ENCODE measurements at regions of chr5 and their contacts with region 1.

Region 1: GRCh38 chr5:36695677-36696673 is 89.6 kb downstream of the SLC1A3 start:
- DNase-seq: peak; percentile 69
- ATAC-seq: peak; percentile 79
- H3K4me3 ChIP-seq: no peak overlapping the region
- H3K27ac ChIP-seq: no peak overlapping the region
- H3K4me1 ChIP-seq: peaks cover 1 to 10% of the 10 kb centered on the region in 2 experiments; a peak in 2 of 4 replicates
- H3K27me3 ChIP-seq: no peaks in the 10 kb centered on the region
- CTCF ChIP-seq: peak; percentile 67 to 86 (median 85)
- POLR2A ChIP-seq: no peak
- RAD21 ChIP-seq: peak; percentile 82

Region 2: DNA sequence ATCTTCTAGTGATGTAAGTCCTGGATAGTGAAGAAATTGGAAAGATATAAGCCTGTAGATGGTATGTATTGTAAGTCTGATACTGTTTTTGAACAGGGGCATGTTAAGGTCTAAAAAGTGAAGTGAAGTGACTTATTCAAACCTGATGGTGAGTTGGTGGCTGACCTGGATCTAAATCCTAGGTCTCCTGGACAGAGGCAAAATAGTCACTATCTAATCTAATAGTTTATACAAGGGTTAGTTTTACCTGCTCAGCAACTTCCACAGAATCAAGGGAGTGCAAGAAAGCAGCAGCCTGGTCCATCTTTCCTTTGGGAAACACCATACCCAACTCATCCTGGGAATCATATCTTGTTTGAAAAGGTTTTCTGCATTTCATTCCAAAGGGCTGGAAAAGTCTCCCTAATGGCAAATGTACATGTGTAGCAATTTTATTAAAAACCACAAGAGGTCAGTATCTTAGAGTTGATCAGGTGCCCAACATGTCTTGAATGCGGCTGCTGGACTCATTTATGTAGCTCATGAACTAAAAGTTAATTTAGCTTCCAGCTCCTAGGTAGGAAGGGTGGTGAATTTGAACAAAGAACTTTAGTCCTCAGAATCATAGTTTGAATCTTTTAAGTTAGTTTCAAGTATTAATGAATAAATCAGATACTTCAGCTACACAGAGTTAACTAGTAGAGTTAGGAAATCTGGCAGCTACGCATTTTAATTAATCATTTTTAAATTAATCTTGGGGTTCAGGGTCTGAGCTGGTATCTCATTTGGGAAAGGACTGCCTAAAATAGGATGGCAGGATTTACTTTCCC is 518.1 kb before region 1 on chr5:
- CTCF ChIA-PET with region 1: interaction called, 10 read pairs
- POLR2A ChIA-PET with region 1: no interaction called
- RAD21 ChIA-PET with region 1: no interaction called
- intact Hi-C with region 1: loop called (anchors 2 kb)
- DNase-seq: peak; percentile 7
- ATAC-seq: peak; percentile 82
- H3K4me3 ChIP-seq: no peak overlapping the region
- H3K27ac ChIP-seq: no peak overlapping the region
- H3K4me1 ChIP-seq: no peaks in the 10 kb centered on the region
- H3K27me3 ChIP-seq: no peaks in the 10 kb centered on the region
- CTCF ChIP-seq: peak; percentile 41 to 66 (median 42); a peak in 3 of 6 replicates
- POLR2A ChIP-seq: no peak
- RAD21 ChIP-seq: peak; percentile 55

Region 3: DNA sequence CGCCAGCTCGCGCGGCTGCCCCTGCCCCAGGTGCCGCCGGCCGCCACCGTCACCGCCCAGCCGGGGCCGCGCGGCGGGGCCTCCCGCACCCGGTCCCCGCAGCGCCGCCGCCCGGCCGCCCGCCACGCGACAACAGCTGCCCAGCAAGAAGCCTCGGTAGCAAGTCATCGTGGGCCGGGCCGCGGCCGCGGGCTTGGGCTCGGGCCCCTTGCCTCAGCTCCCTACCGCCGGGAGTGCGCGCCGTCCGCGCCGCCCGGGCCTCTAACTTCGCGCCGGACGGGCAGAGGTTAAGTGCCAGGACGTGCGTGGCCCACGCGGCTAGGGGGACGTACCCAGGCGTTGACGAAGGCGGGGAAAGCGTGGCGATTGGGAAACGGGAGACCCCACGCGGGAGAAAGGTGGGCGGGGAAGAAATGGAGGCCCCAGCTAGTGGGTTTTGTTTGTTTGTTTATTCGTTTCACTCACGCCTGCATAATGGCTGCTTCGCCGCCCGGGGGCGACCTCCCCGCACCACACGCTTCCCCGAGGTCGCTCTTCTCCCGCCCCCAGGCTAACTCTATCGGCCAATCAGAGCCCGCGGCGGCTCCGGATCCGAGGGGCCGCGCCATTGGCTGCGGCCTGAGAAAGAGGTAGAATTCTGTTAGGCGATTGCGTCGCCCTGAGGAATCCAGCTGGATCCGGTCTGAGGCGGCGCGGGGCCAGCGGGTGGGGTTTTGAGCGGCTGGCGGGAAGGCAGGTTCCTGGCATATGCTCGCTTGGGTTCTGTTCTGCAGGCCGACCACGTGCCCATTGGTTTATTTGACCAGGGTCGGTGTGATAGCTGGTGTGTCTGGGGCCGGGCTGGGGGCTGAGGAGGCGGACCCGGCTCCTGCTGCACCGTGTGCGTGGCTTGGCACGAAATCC is 454.1 kb before region 1 on chr5 and contains the start of gene NADK2:
- CTCF ChIA-PET with region 1: interaction called, 11 read pairs
- POLR2A ChIA-PET with region 1: no interaction called
- RAD21 ChIA-PET with region 1: no interaction called
- intact Hi-C with region 1: no loop called
- DNase-seq: peak; percentile 90
- ATAC-seq: peak; percentile 87
- H3K4me3 ChIP-seq: peak within 1 kb of the TSS; percentile 65 to 75
- H3K27ac ChIP-seq: peak within 1 kb of the TSS; percentile 94
- H3K4me1 ChIP-seq: peaks cover 14 to 33% of the 10 kb centered on the region in 2 experiments; a peak in 3 of 4 replicates
- H3K27me3 ChIP-seq: no peaks in the 10 kb centered on the region
- CTCF ChIP-seq: peak; percentile 34 to 56 (median 55); a peak in 5 of 6 replicates
- POLR2A ChIP-seq: peak; percentile 36
- RAD21 ChIP-seq: peak; percentile 32; the same call in 1 of the 2 replicates
- total RNA-seq, gene NADK2: 21.2 TPM

Region 4: DNA sequence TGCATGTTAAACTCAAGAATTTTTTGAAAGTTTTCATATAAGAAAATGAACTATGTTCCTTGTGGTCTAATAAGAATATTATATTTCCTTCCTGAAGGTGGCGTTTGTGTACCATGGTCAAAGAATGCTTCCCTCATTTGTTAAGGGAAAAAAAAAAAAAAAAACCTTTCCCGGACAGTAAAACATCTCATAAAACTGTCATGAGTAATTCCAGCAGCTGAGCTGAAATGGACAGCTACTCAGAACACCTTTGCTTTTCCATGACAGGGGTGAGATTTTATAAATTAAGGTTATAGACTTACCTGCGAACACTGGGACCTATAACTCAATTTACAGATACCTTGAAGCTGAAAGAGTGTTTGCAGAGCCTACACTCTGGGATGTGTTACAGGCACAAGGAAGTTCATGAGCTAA is 281.1 kb before region 1 on chr5:
- CTCF ChIA-PET with region 1: interaction called, 52 read pairs
- POLR2A ChIA-PET with region 1: interaction called, 3 read pairs
- RAD21 ChIA-PET with region 1: interaction called, 4 to 6 read pairs
- intact Hi-C with region 1: loop called (anchors 1 kb)
- DNase-seq: peak; percentile 37
- ATAC-seq: peak; percentile 73
- H3K4me3 ChIP-seq: no peak overlapping the region
- H3K27ac ChIP-seq: no peak overlapping the region
- H3K4me1 ChIP-seq: peaks cover 0 to 10% of the 10 kb centered on the region in 2 experiments; a peak in 1 of 4 replicates
- H3K27me3 ChIP-seq: no peaks in the 10 kb centered on the region
- CTCF ChIP-seq: peak; percentile 21 to 81 (median 61); a peak in 4 of 6 replicates
- POLR2A ChIP-seq: no peak
- RAD21 ChIP-seq: peak; percentile 81

Region 5: GRCh38 chr5:36507332-36507952 is 188.5 kb before region 1 on chr5:
- CTCF ChIA-PET with region 1: interaction called, 5 read pairs
- POLR2A ChIA-PET with region 1: no interaction called
- RAD21 ChIA-PET with region 1: no interaction called
- intact Hi-C with region 1: loop called (anchors 2 kb)
- DNase-seq: peak; percentile 48
- ATAC-seq: peak; percentile 81
- H3K4me3 ChIP-seq: no peak overlapping the region
- H3K27ac ChIP-seq: no peak overlapping the region
- H3K4me1 ChIP-seq: peaks cover 0 to 5% of the 10 kb centered on the region in 2 experiments; a peak in 2 of 4 replicates
- H3K27me3 ChIP-seq: no peaks in the 10 kb centered on the region
- CTCF ChIP-seq: peak; percentile 63 to 87 (median 84); a peak in 5 of 6 replicates
- POLR2A ChIP-seq: no peak
- RAD21 ChIP-seq: peak; percentile 76

Region 6: DNA sequence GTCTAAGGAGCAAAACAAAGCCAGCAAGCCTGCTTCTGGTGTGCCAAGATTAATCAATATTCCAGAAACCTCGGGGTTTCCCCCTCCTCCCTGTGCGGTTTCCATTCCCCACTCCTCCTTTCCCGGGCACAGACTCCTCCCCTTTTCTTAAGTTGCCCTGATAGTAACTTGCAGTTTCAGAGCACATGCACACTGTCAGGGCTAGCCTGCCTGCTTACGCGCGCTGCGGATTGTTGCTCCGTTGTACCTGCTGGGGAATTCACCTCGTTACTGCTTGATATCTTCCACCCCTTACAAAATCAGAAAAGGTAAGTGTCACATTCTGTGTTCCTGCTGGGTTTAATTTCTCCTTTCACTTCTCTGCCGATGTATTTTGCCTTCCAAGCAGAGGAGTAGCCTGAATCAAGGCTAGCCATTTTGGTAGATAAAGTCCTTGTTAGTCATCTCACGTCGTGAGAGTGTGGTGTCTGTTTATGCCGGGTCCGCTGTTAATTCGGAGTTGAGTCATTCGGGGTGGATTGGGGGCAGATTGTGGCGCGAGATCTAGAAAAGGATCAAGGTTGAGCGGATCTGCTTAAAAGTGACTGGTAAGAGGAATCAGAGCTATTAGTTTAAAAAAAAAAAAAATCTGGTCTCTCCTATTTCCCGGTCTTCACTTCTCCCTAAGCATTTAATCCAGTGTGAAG is 89.4 kb before region 1 on chr5 and contains the start of gene SLC1A3:
- CTCF ChIA-PET with region 1: interaction called, 10 read pairs
- POLR2A ChIA-PET with region 1: no interaction called
- RAD21 ChIA-PET with region 1: no interaction called
- intact Hi-C with region 1: loop called (anchors 2 kb)
- DNase-seq: peak; percentile 74
- ATAC-seq: peak; percentile 93
- H3K4me3 ChIP-seq: peak within 1 kb of the TSS; percentile 69
- H3K27ac ChIP-seq: peak within 1 kb of the TSS; percentile 67
- H3K4me1 ChIP-seq: peaks cover 8 to 27% of the 10 kb centered on the region in 2 experiments; a peak in 3 of 4 replicates
- H3K27me3 ChIP-seq: peaks cover 3% of the 10 kb centered on the region; the same call in 1 of the 2 replicates
- CTCF ChIP-seq: no peak
- POLR2A ChIP-seq: peak; percentile 85
- RAD21 ChIP-seq: no peak
- total RNA-seq, gene SLC1A3: 12.9 TPM

Measured in HCT116 (cell line).